K562 (cell line): ENCODE measurements at regions of chr1 and their contacts with region 1.

Region 1: GRCh38 chr1:11634365-11635192 is 19.6 kb downstream of the FBXO2 start:
- DNase-seq: no peak
- ATAC-seq: no peak
- H3K4me3 ChIP-seq: no peak overlapping the region
- H3K27ac ChIP-seq: no peak overlapping the region
- H3K4me1 ChIP-seq: no peaks in the 10 kb centered on the region
- H3K27me3 ChIP-seq: peaks cover 21 to 67% of the 10 kb centered on the region in 2 experiments; a peak in 4 of 5 replicates
- CTCF ChIP-seq: no peak
- EP300 ChIP-seq: no peak
- POLR2A ChIP-seq: no peak
- RAD21 ChIP-seq: no peak

Region 2: DNA sequence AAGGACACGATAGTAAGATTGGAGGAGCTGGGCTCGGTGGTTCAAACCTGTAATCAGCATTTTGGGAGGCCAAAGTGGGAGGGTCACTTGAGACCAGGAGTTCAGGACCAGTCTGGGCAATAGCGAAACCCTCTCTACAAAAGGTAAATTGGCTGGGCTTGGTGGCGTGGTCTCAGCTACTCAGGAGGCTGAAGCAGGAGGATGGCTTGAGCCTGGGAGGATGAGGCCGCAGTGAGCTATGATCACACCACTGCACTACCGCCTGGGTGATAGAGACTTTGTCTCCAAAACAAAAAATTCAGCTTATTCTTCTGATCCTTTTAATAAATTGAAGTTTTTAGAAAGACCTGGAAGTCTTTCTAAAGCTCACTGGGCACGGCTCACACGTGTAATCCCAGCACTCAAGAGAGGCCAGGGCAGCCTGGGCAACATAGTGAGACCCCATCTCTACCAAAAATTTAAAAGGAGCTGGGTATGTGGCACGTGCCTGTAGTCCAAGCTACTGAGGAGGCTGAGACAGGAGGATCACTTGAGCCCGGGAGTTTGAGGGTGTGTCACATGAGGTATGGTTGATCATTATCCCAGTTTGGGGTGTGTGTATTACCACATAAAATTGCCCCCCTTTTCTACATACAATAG is 602.8 kb before region 1 on chr1:
- CTCF ChIA-PET with region 1: no interaction called
- POLR2A ChIA-PET with region 1: no interaction called
- in situ Hi-C with region 1: loop called (anchors 5 kb)
- intact Hi-C with region 1: no loop called
- DNase-seq: no peak
- ATAC-seq: no peak; the same call in 2 of the 3 replicates
- H3K4me3 ChIP-seq: no peak overlapping the region
- H3K27ac ChIP-seq: no peak overlapping the region
- H3K4me1 ChIP-seq: no peaks in the 10 kb centered on the region
- H3K27me3 ChIP-seq: peaks cover 8 to 17% of the 10 kb centered on the region in 2 experiments
- CTCF ChIP-seq: no peak
- EP300 ChIP-seq: no peak
- POLR2A ChIP-seq: no peak
- RAD21 ChIP-seq: no peak

Region 3: DNA sequence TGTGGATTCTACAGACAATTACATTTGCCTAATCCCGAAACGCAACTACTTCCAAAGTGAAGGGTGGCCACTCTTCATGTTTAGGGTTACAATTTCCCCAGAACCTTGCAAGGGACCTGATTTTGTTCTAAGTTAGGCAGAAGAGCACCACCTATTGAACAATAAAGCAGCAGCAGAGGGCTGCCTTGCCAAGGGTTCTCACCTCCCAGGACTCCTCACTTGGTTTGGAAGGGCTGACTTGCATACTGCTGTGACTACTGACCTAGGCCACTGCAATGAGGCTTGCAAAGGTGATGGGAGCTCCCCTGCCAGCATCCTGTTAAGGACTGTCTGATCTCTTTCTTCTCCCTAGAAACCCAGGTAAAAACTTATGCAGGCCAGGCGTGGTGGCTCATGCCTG is 386.4 kb before region 1 on chr1:
- CTCF ChIA-PET with region 1: no interaction called
- POLR2A ChIA-PET with region 1: no interaction called
- in situ Hi-C with region 1: loop called (anchors 5 kb)
- intact Hi-C with region 1: no loop called
- DNase-seq: peak in 1 of 4 experiments; percentile 21
- ATAC-seq: peak; percentile 63
- H3K4me3 ChIP-seq: no peak overlapping the region
- H3K27ac ChIP-seq: no peak overlapping the region
- H3K4me1 ChIP-seq: no peaks in the 10 kb centered on the region
- H3K27me3 ChIP-seq: no peaks in the 10 kb centered on the region
- CTCF ChIP-seq: peak in 2 of 3 experiments; percentile 15 to 23; a peak in 1 of 6 replicates
- EP300 ChIP-seq: no peak
- POLR2A ChIP-seq: no peak
- RAD21 ChIP-seq: no peak